ENCODE measurements at regions of chr12 and their contacts with region 1.

Region 1: GRCh38 chr12:132600048-132601032 is 10.0 kb downstream of the LRCOL1 start:
- DNase-seq: peak; percentile 72 to 84 (median 78)
- H3K4me3 ChIP-seq: peak overlapping the region; percentile 36
- H3K27ac ChIP-seq: peak overlapping the region in 1 of 2 donors; percentile 33
- H3K4me1 ChIP-seq: peaks cover 4% of the 10 kb centered on the region
- H3K27me3 ChIP-seq: no peaks in the 10 kb centered on the region
- CTCF ChIP-seq: peak; percentile 50 to 71 (median 65)
- EP300 ChIP-seq: no peak
- POLR2A ChIP-seq: no peak

Region 2: GRCh38 chr12:132153501-132154340 is 446.6 kb before region 1 on chr12:
- intact Hi-C with region 1: loop called in 1 of 4 experiments (anchors 5 kb)
- DNase-seq: peak; percentile 56 to 84 (median 73)
- H3K4me3 ChIP-seq: peak overlapping the region; percentile 11
- H3K27ac ChIP-seq: no peak overlapping the region
- H3K4me1 ChIP-seq: no peaks in the 10 kb centered on the region
- H3K27me3 ChIP-seq: no peaks in the 10 kb centered on the region
- CTCF ChIP-seq: peak; percentile 80 to 85 (median 81)
- EP300 ChIP-seq: no peak
- POLR2A ChIP-seq: no peak

Region 3: DNA sequence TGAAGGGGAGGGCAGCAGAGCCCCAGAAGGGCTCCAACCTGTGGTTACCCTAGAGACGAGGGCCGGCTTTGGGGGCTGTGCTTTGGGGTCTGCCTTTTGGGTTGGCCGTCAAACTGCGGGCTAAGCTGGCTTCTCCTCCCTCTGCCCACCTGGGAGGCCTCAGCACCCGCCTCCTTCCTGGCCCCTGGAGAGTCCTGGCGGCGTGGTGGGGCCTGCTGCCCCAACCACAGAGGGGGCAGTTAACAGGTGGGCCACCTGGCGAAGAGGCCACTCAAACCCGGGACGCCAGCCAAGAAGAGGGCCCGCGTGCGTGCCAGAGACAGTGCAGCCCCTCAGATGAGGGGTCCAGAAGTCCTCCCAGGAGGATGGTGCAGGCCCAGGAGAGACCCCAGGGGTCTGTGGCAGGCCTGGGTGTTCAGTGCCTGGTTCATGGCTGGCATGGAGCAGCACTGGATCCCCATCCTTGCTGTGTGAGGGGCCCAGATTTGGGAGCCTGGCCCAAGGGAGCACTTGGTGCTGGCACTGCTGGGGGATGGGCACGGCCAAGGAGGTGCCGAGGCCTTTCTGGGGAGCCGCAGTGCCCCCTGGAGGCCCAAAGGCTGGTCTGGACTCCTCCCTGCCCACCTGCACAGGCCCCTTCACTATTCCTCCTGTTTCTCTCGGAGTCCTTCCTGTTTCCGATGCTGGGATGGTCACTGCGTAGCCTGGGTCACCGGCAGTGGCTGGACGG is 38.7 kb before region 1 on chr12:
- intact Hi-C with region 1: loop called in 1 of 4 experiments (anchors 1 kb)
- DNase-seq: peak in 2 of 5 donors; percentile 56 to 63
- H3K4me3 ChIP-seq: no peak overlapping the region
- H3K27ac ChIP-seq: no peak overlapping the region
- H3K4me1 ChIP-seq: peaks cover 12% of the 10 kb centered on the region
- H3K27me3 ChIP-seq: no peaks in the 10 kb centered on the region
- CTCF ChIP-seq: no peak
- EP300 ChIP-seq: no peak
- POLR2A ChIP-seq: no peak

Region 4: GRCh38 chr12:132638541-132639418 is 38.4 kb after region 1 on chr12:
- intact Hi-C with region 1: loop called in 1 of 4 experiments (anchors 2 kb)
- DNase-seq: peak in 2 of 5 donors; percentile 48 to 63
- H3K4me3 ChIP-seq: no peak overlapping the region
- H3K27ac ChIP-seq: no peak overlapping the region
- H3K4me1 ChIP-seq: no peaks in the 10 kb centered on the region
- H3K27me3 ChIP-seq: no peaks in the 10 kb centered on the region
- CTCF ChIP-seq: peak in 1 of 3 donors; percentile 51
- EP300 ChIP-seq: no peak
- POLR2A ChIP-seq: no peak

Measured in ovary (tissue), 10 donors.